Panc1 (cell line): ENCODE measurements at regions of chr1 and their contacts with region 1.

Region 1: GRCh38 chr1:221473411-221473810 is 268.5 kb downstream of the DUSP10 start:
- DNase-seq: no peak
- ATAC-seq: no peak
- H3K4me3 ChIP-seq: no peak overlapping the region
- H3K27ac ChIP-seq: no peak overlapping the region
- H3K4me1 ChIP-seq: no peaks in the 10 kb centered on the region
- H3K27me3 ChIP-seq: no peaks in the 10 kb centered on the region
- CTCF ChIP-seq: no peak

Region 2: DNA sequence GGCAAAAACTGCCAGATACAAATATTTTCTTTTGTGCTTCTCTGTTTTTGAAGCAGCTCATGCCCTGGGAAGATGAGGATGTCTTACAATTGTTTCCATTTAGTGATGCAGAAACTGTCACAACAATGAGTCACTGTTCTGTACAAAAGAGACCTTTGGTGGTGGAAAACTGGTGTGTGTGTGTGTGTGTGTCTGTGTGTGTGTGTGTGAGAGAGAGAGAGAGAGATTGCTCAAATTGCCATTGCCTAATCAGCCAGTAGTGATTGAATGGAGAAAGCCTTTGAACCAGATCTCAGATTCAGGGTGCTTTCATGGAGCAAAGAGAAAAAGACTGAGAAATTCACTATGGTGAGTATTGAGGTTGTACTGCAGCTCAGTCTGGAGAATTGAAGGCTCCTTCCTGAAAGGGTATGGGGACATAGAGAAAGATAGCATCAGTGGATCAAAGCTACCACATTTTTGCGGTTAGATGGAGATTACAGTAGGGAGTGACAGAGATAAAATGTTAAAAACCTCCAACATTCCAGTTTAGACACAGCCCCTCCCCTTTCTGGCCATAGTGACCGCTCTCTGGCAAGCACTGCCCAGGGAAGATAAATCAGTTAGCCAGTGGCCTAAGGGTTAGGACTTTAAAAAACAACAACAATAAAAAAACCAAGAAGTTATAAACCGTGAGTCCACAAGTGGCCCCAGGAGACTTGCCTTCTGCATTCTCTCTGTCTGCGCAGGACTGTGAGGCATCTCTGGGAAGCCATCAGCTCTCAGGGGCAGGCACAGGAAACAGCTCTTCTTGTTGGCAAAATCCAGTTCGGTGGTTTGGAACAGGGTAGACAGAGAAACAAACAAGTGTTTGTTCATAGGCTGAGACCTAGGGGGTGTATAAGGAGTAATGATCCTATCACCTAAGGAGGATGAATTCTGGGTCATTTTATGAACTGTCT is 138.0 kb before region 1 on chr1:
- CTCF ChIA-PET with region 1: no interaction called
- POLR2A ChIA-PET with region 1: no interaction called
- in situ Hi-C with region 1: no loop called
- intact Hi-C with region 1: no loop called
- DNase-seq: no peak
- ATAC-seq: peak; percentile 58
- H3K4me3 ChIP-seq: no peak overlapping the region
- H3K27ac ChIP-seq: no peak overlapping the region
- H3K4me1 ChIP-seq: no peaks in the 10 kb centered on the region
- H3K27me3 ChIP-seq: no peaks in the 10 kb centered on the region
- CTCF ChIP-seq: no peak

Region 3: DNA sequence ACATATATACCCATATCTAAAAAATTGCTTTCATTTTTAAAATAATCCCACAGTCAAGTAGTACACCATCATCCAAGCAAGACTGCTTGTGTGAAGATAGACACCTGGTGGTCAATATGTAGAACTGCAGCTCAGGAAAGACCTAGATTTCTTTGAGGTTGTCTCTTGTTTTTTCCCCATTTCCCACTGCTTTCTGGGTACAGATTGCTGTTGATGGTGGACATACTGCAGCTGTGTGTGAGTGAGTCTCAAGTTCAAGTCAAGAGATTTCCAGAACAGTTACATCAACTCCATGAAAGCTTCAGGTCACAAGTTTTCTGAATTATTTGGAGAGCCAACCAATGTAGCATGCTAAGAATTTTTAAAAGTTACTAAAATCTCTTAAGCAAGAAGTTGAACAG is 37.9 kb before region 1 on chr1:
- CTCF ChIA-PET with region 1: no interaction called
- POLR2A ChIA-PET with region 1: no interaction called
- in situ Hi-C with region 1: no loop called
- intact Hi-C with region 1: no loop called
- DNase-seq: no peak
- ATAC-seq: no peak
- H3K4me3 ChIP-seq: no peak overlapping the region
- H3K27ac ChIP-seq: no peak overlapping the region
- H3K4me1 ChIP-seq: no peaks in the 10 kb centered on the region; the same call in 1 of the 2 replicates
- H3K27me3 ChIP-seq: no peaks in the 10 kb centered on the region
- CTCF ChIP-seq: peak; percentile 88

Region 4: GRCh38 chr1:221509575-221510355 is 36.4 kb after region 1 on chr1:
- CTCF ChIA-PET with region 1: no interaction called
- POLR2A ChIA-PET with region 1: no interaction called
- in situ Hi-C with region 1: no loop called
- intact Hi-C with region 1: loop called (anchors 2 kb)
- DNase-seq: no peak
- ATAC-seq: no peak
- H3K4me3 ChIP-seq: no peak overlapping the region
- H3K27ac ChIP-seq: no peak overlapping the region
- H3K4me1 ChIP-seq: no peaks in the 10 kb centered on the region
- H3K27me3 ChIP-seq: no peaks in the 10 kb centered on the region
- CTCF ChIP-seq: no peak

Region 5: DNA sequence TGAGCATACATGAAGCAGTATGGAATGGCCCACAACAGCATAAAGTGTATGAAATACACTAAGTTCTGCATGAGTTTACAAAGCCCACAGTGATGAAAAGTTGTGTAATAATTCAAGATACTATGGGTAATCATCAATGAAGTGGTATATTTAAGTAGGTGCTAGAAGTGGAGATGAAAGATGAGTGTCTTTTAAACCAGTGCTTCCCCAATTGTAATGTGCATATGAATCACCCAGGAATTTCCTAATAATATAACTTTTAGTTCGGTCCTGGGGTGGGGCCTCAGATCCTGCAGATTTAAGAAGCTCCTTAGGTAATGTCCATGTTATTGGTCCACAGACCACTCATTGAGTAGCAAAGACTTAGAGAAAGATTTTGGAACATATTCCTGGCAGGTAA is 83.6 kb after region 1 on chr1:
- CTCF ChIA-PET with region 1: no interaction called
- POLR2A ChIA-PET with region 1: no interaction called
- in situ Hi-C with region 1: no loop called
- intact Hi-C with region 1: no loop called
- DNase-seq: no peak
- ATAC-seq: no peak
- H3K4me3 ChIP-seq: no peak overlapping the region
- H3K27ac ChIP-seq: no peak overlapping the region
- H3K4me1 ChIP-seq: no peaks in the 10 kb centered on the region
- H3K27me3 ChIP-seq: no peaks in the 10 kb centered on the region; the same call in 1 of the 2 replicates
- CTCF ChIP-seq: no peak

Region 6: GRCh38 chr1:222136869-222137268 is 663.5 kb after region 1 on chr1:
- CTCF ChIA-PET with region 1: no interaction called
- POLR2A ChIA-PET with region 1: no interaction called
- in situ Hi-C with region 1: no loop called
- intact Hi-C with region 1: no loop called
- DNase-seq: no peak
- ATAC-seq: no peak
- H3K4me3 ChIP-seq: no peak overlapping the region
- H3K27ac ChIP-seq: no peak overlapping the region
- H3K4me1 ChIP-seq: no peaks in the 10 kb centered on the region
- H3K27me3 ChIP-seq: no peaks in the 10 kb centered on the region
- CTCF ChIP-seq: no peak